Activated CD8-positive, alpha-beta memory T cell treated with anti-CD3 and anti-CD28 coated beads, Interleukin-2, amount 10 ng/mL, durations not matched to agents 7 days and 5 days (primary cell): ENCODE measurements at regions of chr22 and their contacts with region 1.

Region 1: DNA sequence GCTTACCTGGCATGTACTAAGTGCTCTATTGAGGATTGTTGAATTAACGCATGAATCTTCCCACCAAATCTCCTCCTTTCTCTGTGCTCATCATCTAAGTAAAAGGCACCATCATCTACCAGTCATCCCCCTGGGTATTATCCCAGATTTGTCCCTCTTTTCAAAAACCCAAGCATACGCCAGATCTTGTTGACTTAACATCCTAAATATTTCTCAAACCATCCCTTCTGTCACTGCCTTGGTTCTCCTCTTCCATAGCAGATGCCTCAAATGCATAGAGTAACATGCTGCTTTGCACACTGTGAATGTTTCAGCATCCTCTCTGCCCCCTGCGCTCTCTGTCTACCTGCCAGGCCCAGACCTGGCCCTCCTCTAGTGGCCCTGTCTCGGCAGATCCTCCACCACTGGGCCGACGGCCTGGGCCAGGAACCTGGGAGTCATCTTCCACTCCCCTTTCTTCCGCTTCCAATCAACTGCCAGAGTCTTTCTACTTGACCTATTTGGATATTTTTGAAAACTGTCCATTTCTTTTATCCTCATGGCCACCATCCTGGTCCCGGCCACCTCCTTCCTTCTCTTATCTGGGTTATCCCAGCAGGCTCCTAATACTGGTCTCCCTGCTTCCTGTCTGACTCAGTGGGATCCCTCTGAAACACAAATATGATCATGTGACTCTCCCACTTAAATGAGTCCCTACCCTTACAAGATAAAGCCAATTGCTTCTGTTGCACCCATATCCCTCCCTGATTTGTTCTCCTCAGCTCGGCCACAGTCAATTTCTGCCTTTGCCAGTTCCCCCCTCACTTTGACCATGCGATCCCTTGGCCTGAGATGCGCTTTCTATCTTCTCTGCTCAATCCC is 3.4 kb upstream of the TAB1 start:
- DNase-seq: no peak
- ATAC-seq: no peak
- H3K4me3 Mint-ChIP-seq: no peak overlapping the region
- H3K27ac Mint-ChIP-seq: no peak overlapping the region
- H3K4me1 Mint-ChIP-seq: peaks cover 10% of the 10 kb centered on the region
- H3K27me3 Mint-ChIP-seq: no peaks in the 10 kb centered on the region

Region 2: GRCh38 chr22:39197396-39197977 is 198.7 kb before region 1 on chr22:
- CTCF ChIA-PET with region 1: no interaction called
- DNase-seq: no peak
- ATAC-seq: no peak
- H3K4me3 Mint-ChIP-seq: no peak overlapping the region
- H3K27ac Mint-ChIP-seq: no peak overlapping the region
- H3K4me1 Mint-ChIP-seq: no peaks in the 10 kb centered on the region
- H3K27me3 Mint-ChIP-seq: peaks cover 57% of the 10 kb centered on the region

Region 3: DNA sequence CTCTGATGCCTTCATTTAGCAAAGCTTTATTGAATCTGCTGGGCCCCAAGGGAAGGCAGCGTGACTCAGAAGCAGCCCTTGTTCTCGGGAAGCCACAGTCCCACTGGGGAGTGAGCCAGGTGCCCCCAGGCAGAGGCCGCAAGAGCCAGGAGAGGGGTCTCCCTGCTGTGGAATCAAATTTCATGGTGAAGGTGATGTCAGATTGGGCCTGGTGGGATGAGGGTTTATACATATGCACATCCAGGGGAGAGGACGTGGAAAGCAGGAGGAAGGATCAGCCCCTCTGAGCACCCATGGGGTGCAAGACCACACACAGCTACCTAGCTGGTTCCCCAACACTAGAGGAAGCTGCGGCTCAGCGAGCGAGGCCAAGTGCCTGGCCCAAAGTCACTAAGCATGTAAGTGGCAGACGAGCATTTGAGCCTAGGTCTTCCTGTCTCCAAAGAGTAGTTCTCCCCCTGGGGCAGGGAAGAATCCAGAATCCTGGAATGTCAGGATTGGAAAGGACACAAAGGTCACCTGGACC is 44.4 kb before region 1 on chr22:
- CTCF ChIA-PET with region 1: interaction called, 11 read pairs
- DNase-seq: peak; percentile 79
- ATAC-seq: peak; percentile 74
- H3K4me3 Mint-ChIP-seq: peak overlapping the region; percentile 72
- H3K27ac Mint-ChIP-seq: peak overlapping the region; percentile 81
- H3K4me1 Mint-ChIP-seq: peaks cover 31% of the 10 kb centered on the region
- H3K27me3 Mint-ChIP-seq: peaks cover 27% of the 10 kb centered on the region

Region 4: DNA sequence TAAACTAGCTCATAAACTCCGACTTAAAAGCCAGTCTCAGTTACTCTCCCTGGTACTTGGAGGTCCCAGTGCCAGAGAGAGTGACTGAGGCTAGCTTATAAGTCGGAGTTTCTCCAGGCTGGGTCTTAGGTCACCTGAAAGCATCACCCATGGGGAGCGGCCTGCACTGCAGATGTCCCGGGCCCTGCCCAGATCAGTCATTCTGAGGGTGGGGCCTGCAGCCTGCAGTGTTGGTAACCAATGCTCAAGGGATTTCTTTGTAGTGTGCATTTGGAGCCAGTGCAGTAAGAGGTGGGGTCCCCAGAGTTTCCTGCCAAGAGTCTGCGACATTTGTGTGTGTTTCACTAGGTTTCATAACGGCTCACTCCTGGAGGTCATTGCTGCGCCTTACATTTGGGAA is 18.2 kb after region 1 on chr22:
- CTCF ChIA-PET with region 1: interaction called, 15 read pairs
- DNase-seq: no peak
- ATAC-seq: no peak
- H3K4me3 Mint-ChIP-seq: no peak overlapping the region
- H3K27ac Mint-ChIP-seq: no peak overlapping the region
- H3K4me1 Mint-ChIP-seq: peaks cover 30% of the 10 kb centered on the region
- H3K27me3 Mint-ChIP-seq: no peaks in the 10 kb centered on the region

Region 5: DNA sequence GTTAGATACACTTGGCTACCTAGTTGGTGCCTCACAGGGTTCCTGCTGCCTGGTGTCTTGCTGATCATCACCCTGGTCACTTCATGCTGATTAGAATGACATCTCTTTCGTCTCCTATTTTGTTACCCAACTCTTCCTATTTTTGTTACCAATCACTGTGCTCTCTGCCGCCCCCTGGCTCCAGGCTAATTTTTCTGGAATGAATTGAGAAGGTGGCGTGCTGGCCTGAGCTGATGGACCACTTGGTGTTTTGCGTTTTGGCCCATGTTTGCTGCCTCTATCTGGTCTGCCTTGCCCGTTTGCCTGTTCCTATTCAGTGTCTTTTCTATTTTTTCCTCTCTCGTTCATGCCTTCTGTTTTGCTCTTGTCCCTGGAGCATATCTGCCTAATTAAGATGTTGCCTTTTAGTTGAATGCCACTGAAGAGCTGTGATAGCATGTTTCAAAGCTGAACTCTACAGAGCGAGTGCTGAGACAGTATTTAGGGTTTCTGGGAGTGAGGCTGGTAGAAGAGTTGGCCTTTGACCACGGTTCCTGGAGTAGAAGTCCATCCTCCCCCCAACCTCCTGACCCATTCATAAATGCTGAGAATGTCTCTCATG is 118.3 kb after region 1 on chr22:
- CTCF ChIA-PET with region 1: interaction called, 15 read pairs
- DNase-seq: peak; percentile 68
- ATAC-seq: no peak
- H3K4me3 Mint-ChIP-seq: no peak overlapping the region
- H3K27ac Mint-ChIP-seq: no peak overlapping the region
- H3K4me1 Mint-ChIP-seq: peaks cover 34% of the 10 kb centered on the region
- H3K27me3 Mint-ChIP-seq: no peaks in the 10 kb centered on the region